HCT116 (cell line): ENCODE measurements at regions of chr3 and their contacts with region 1.

Region 1: DNA sequence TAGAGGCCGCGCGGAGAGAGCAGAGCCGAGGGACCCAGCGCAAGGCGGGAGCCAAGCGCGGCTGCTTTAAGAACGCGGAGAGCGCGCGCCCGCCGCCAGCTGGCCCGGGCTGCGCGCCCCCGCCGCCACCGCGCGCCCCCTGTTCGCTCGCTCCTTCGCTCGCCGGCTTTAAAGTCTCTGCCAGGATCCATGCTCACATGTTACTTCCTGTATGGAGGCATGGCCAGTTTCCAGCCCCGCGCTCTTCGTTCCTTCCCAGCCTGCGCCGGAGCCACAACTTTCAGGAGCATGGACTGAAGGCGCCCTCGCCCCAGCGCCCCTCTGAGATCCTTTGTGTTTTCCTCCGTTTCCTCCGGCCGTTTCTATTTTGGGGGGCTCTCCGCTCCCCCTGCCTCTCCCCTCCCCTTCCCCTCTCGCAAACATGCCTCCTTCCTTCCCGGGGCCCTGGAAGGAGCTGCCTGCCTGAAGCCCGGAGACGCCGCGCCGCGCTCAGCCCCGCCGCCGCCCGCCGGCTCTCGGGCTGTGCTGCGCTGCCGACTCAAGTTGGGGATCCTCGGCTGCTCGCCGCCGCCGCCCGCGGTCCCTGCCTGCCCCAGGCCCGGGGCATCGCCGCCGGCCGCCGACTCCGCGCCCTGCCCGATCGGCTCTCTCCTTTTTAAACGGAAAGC is at the start of gene PTPRG:
- DNase-seq: peak; percentile 69
- ATAC-seq: peak; percentile 72
- H3K4me3 ChIP-seq: peak within 1 kb of the TSS; percentile 80 to 83
- H3K27ac ChIP-seq: peak within 1 kb of the TSS; percentile 95
- H3K4me1 ChIP-seq: peaks cover 10 to 17% of the 10 kb centered on the region in 2 experiments
- H3K27me3 ChIP-seq: no peaks in the 10 kb centered on the region
- CTCF ChIP-seq: no peak
- POLR2A ChIP-seq: peak; percentile 82
- RAD21 ChIP-seq: no peak
- total RNA-seq, gene PTPRG: 32.1 TPM

Region 2: GRCh38 chr3:61657689-61658088 is 96.2 kb after region 1 on chr3:
- CTCF ChIA-PET with region 1: no interaction called
- POLR2A ChIA-PET with region 1: no interaction called
- RAD21 ChIA-PET with region 1: no interaction called
- intact Hi-C with region 1: loop called (anchors 5 kb)
- DNase-seq: no peak
- ATAC-seq: no peak
- H3K4me3 ChIP-seq: no peak overlapping the region
- H3K27ac ChIP-seq: no peak overlapping the region
- H3K4me1 ChIP-seq: peaks cover 8 to 19% of the 10 kb centered on the region in 2 experiments
- H3K27me3 ChIP-seq: no peaks in the 10 kb centered on the region
- CTCF ChIP-seq: no peak
- POLR2A ChIP-seq: no peak
- RAD21 ChIP-seq: no peak

Region 3: DNA sequence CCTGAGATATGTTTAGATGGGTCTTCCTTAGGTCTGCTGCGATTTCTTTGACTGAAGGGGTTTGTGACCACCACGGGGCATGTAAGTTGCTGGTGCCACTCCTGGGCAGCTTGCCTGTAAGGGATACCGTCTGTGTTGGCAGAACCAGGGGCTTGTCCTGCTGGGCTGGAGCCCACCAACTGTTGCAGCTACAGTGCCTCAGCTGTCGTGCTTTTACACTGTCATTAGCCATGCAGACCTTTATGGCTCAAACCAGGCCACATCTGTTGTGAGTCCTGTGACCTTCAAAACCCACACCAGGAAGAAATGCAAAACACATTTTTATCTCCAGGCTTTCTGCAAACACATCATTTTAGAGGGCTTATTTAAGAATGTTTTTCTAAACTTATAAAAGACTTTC is 168.5 kb after region 1 on chr3:
- CTCF ChIA-PET with region 1: no interaction called
- POLR2A ChIA-PET with region 1: no interaction called
- RAD21 ChIA-PET with region 1: no interaction called
- intact Hi-C with region 1: no loop called
- DNase-seq: no peak
- ATAC-seq: no peak
- H3K4me3 ChIP-seq: no peak overlapping the region
- H3K27ac ChIP-seq: no peak overlapping the region
- H3K4me1 ChIP-seq: peaks cover 5 to 12% of the 10 kb centered on the region in 2 experiments; a peak in 2 of 4 replicates
- H3K27me3 ChIP-seq: no peaks in the 10 kb centered on the region
- CTCF ChIP-seq: no peak
- POLR2A ChIP-seq: no peak
- RAD21 ChIP-seq: no peak

Region 4: DNA sequence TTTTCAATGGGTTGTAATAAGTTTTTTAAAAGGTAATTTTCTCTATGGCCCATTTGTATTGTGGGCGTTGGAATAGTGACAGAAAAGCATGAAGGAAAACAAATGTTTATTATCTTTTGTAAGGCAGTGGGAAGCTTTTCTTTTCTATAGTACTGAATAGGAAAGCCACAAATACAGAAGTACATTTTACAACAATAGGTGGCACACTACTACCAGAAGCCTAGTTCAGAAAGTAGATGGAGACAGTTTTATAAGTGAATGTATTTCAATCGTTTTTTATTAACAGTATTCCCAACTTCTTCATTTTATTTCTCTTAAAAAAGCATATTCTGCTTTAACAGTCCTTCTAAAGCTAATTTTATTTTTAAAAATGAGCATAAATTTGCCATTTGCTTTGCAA is 296.5 kb after region 1 on chr3:
- CTCF ChIA-PET with region 1: no interaction called
- POLR2A ChIA-PET with region 1: no interaction called
- RAD21 ChIA-PET with region 1: no interaction called
- intact Hi-C with region 1: loop called (anchors 10 kb)
- DNase-seq: peak; percentile 7
- ATAC-seq: no peak
- H3K4me3 ChIP-seq: no peak overlapping the region
- H3K27ac ChIP-seq: no peak overlapping the region
- H3K4me1 ChIP-seq: no peaks in the 10 kb centered on the region
- H3K27me3 ChIP-seq: no peaks in the 10 kb centered on the region
- CTCF ChIP-seq: peak in 2 of 3 experiments; percentile 50 to 56; a peak in 3 of 6 replicates
- POLR2A ChIP-seq: no peak
- RAD21 ChIP-seq: peak; percentile 72

Region 5: GRCh38 chr3:61877348-61878138 is 316.0 kb after region 1 on chr3:
- CTCF ChIA-PET with region 1: no interaction called
- POLR2A ChIA-PET with region 1: no interaction called
- RAD21 ChIA-PET with region 1: no interaction called
- intact Hi-C with region 1: loop called (anchors 5 kb)
- DNase-seq: peak; percentile 23
- ATAC-seq: peak; percentile 77
- H3K4me3 ChIP-seq: no peak overlapping the region
- H3K27ac ChIP-seq: no peak overlapping the region
- H3K4me1 ChIP-seq: peaks cover 4 to 10% of the 10 kb centered on the region in 2 experiments
- H3K27me3 ChIP-seq: no peaks in the 10 kb centered on the region
- CTCF ChIP-seq: peak in 2 of 3 experiments; percentile 40 to 49; a peak in 4 of 6 replicates
- POLR2A ChIP-seq: no peak
- RAD21 ChIP-seq: 0 out of 2 replicates have a peak, but pooled peaks have one; percentile 13

Region 6: GRCh38 chr3:61936344-61936937 is 374.9 kb after region 1 on chr3:
- CTCF ChIA-PET with region 1: interaction called, 3 read pairs
- POLR2A ChIA-PET with region 1: no interaction called
- RAD21 ChIA-PET with region 1: no interaction called
- intact Hi-C with region 1: loop called (anchors 5 kb)
- DNase-seq: no peak
- ATAC-seq: peak; percentile 88
- H3K4me3 ChIP-seq: no peak overlapping the region
- H3K27ac ChIP-seq: no peak overlapping the region
- H3K4me1 ChIP-seq: peaks cover 3 to 4% of the 10 kb centered on the region in 2 experiments; a peak in 1 of 4 replicates
- H3K27me3 ChIP-seq: no peaks in the 10 kb centered on the region
- CTCF ChIP-seq: peak; percentile 37 to 88 (median 86); a peak in 5 of 6 replicates
- POLR2A ChIP-seq: no peak
- RAD21 ChIP-seq: peak; percentile 50

Region 7: GRCh38 chr3:62131592-62131991 is 570.1 kb after region 1 on chr3:
- CTCF ChIA-PET with region 1: no interaction called
- POLR2A ChIA-PET with region 1: no interaction called
- RAD21 ChIA-PET with region 1: no interaction called
- intact Hi-C with region 1: loop called (anchors 5 kb)
- DNase-seq: peak; percentile 2
- ATAC-seq: peak; percentile 68; the same call in 1 of the 2 replicates
- H3K4me3 ChIP-seq: no peak overlapping the region
- H3K27ac ChIP-seq: no peak overlapping the region
- H3K4me1 ChIP-seq: peaks cover 5 to 9% of the 10 kb centered on the region in 2 experiments; a peak in 2 of 4 replicates
- H3K27me3 ChIP-seq: no peaks in the 10 kb centered on the region
- CTCF ChIP-seq: peak; percentile 29 to 52 (median 50); a peak in 4 of 6 replicates
- POLR2A ChIP-seq: no peak
- RAD21 ChIP-seq: peak; percentile 55

Region 8: DNA sequence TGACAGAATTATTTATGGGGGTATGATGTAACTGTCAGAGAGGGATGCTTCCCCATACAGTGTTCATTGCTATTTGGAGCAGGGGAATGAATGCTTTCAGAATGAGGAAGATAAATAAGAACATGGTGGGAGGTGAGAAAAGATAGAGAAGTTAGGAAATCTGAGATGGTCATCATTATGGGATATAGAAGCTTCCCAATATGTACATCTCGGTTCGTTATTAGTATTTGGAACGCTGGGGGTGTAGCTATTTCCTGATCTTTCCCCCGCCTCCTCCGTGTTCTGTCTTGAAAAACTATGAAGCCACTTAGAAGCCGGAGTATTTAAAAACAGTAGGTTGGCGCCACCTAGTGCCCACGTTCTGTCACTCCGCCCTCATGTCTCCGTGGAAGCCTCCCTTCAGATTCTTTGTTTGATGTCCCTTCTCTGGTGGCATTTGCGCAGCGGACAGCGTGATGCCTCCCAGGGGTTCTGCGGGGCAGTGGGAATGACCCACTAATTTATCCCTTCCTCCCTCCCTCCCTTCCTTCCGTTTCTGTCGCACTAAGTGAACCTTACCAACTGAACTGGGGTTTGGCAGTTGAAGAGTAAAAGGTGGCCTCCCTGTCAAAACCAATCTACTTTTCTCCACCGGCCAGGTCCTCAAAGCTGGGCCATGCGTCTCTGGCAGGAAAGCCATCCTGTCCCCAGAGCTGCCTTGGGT is 627.3 kb after region 1 on chr3:
- CTCF ChIA-PET with region 1: interaction called, 6 read pairs
- POLR2A ChIA-PET with region 1: no interaction called
- RAD21 ChIA-PET with region 1: interaction called in 1 of 2 experiments, 3 read pairs
- intact Hi-C with region 1: loop called (anchors 10 kb)
- DNase-seq: peak; percentile 7
- ATAC-seq: peak; percentile 93
- H3K4me3 ChIP-seq: no peak overlapping the region
- H3K27ac ChIP-seq: no peak overlapping the region
- H3K4me1 ChIP-seq: no peaks in the 10 kb centered on the region
- H3K27me3 ChIP-seq: no peaks in the 10 kb centered on the region
- CTCF ChIP-seq: peak; percentile 54 to 85 (median 70); a peak in 5 of 6 replicates
- POLR2A ChIP-seq: no peak
- RAD21 ChIP-seq: peak; percentile 84